ENCODE measurements at regions of chr5 and their contacts with region 1.

Region 1: DNA sequence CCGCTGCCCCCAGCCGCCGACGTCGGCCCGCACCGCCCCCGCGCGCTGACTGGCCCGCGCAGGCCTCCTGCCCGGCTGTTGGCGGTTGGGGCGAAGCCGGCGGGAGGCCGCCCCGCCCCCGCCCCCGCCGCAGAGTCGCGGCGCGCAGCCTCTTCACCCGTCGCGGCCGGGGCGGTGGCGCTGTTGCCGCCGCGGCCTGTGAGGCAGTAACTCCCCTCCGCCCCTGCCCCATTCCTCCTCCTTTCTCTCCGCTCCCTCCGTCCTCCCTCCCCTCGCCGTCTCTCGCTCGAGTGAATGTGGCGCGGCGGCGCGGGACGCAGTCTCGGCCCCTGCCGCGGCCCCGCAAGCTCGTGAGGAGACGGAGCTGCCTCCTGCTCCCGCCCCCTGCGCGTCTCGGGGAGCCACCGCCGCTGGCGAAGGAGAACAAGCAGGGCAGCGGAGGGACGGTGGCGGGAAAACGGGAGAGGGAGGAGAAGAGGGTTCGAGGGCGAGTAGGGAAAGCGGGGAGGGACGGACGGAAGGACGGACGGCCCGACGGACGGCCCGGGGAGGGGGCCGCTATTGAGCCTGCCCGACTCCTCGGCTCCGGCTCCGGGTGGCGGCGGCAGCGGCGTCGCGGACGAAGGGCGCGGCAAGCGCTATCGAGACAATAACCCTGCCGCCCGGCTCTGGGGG is 637 bp upstream of the ERBIN start:
- DNase-seq: peak; percentile 82
- H3K4me3 ChIP-seq: peak overlapping the region; percentile 85 to 97 (median 86)
- H3K27ac ChIP-seq: peak overlapping the region; percentile 94
- H3K4me1 ChIP-seq: peaks cover 4% of the 10 kb centered on the region
- H3K27me3 ChIP-seq: no peaks in the 10 kb centered on the region
- CTCF ChIP-seq: peak in 1 of 2 donors; percentile 43

Region 2: DNA sequence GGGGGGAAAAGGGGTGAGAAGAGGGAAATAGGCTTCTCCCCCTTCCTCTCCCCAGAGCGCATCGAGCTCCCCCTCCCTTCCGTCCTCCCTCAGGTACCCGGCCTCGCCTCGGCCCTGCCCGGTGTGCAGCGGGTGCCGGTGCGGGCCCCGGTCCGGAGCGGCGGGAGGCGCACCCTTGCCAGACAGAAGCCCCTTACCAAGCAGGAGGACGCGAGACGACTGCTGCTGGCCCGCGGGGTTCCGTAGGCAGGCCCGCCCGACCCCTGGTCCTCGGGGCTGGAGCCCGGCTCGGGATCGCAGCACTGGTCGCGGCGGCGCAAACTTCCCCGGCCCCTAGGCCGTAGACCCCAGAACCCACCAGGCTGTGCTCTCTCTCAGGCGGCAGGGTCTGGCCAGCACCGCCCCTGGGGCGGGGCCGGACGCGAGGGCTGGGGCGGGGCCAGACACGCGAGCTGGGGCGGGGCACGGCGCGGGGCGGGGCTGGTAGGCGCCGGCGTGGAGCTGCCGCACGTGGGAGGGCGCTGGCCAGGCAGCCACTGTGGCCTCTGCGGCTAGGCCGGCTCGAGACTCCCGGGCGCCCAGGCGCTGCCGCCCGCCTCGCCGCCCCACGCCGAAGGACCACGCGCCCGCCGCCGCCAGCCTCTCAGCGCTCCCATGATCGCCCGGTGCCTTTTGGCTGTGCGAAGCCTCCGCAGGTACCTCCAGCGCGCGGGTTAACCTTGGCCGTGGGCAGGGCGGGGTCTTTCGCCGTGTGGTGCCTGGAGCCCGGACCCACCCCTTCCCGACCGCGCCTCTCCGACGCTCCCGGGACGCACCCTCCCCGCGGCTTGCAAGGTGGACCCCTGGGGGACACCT is 203.8 kb before region 1 on chr5 and contains the starts of genes NLN and SGTB:
- CTCF ChIA-PET with region 1: no interaction called
- dilution Hi-C with region 1: no loop called
- in situ Hi-C with region 1: no loop called
- intact Hi-C with region 1: loop called (anchors 5 kb)
- DNase-seq: peak; percentile 67
- H3K4me3 ChIP-seq: peak within 1 kb of the TSS; percentile 90 to 96 (median 96)
- H3K27ac ChIP-seq: peak within 1 kb of the TSS; percentile 69
- H3K4me1 ChIP-seq: peaks cover 3% of the 10 kb centered on the region
- H3K27me3 ChIP-seq: no peaks in the 10 kb centered on the region
- CTCF ChIP-seq: no peak
- total RNA-seq, gene NLN: 25.5 to 37.0 TPM
- total RNA-seq, gene SGTB: 15.2 to 20.9 TPM

Region 3: DNA sequence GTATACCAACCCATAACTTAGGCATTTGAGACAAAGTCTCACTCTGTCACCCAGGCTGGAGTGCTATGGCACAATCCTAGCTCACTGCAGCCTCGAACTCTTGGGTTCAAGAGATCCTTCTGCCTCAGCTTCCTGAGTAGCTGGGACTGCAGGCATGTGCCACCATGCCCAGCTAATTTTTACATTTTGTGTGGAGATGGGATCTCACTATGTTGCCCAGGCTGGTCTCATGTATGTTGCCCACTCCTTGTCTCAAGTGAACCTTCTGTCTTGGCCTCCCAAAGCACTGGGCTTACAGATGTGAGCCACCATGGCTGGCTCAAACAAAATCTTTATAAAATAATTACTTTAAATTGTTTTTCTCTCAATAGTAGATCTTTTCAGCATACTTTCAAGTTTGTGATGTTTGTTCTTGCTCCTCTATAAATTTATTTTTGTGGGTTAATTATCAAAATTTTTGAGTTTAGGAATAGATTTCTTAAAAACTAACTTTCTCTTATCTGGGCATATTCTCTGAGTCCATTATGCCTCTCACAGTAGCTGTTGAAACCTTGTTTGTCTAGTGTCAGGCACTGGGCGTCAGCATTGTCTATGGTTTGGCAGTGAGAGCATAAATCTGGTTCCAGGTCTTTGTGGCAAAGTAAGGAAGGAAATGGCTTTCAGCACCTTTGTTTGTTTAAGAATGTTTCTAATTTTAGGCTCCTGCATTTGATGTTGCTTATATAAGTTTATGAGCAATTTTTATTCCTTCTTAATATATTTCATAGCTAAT is 165.0 kb before region 1 on chr5:
- CTCF ChIA-PET with region 1: no interaction called
- dilution Hi-C with region 1: no loop called
- in situ Hi-C with region 1: no loop called
- intact Hi-C with region 1: loop called (anchors 5 kb)
- DNase-seq: peak; percentile 43
- H3K4me3 ChIP-seq: no peak overlapping the region
- H3K27ac ChIP-seq: no peak overlapping the region
- H3K4me1 ChIP-seq: no peaks in the 10 kb centered on the region
- H3K27me3 ChIP-seq: no peaks in the 10 kb centered on the region
- CTCF ChIP-seq: peak; percentile 20 to 51

Region 4: GRCh38 chr5:65871182-65871581 is 54.6 kb before region 1 on chr5:
- CTCF ChIA-PET with region 1: no interaction called
- dilution Hi-C with region 1: no loop called
- in situ Hi-C with region 1: no loop called
- intact Hi-C with region 1: loop called (anchors 2 kb)
- DNase-seq: peak; percentile 80
- H3K4me3 ChIP-seq: no peak overlapping the region
- H3K27ac ChIP-seq: peak overlapping the region; percentile 35
- H3K4me1 ChIP-seq: peaks cover 26% of the 10 kb centered on the region
- H3K27me3 ChIP-seq: no peaks in the 10 kb centered on the region
- CTCF ChIP-seq: no peak

Region 5: GRCh38 chr5:66010476-66010875 is 84.7 kb after region 1 on chr5:
- CTCF ChIA-PET with region 1: no interaction called
- dilution Hi-C with region 1: no loop called
- in situ Hi-C with region 1: no loop called
- intact Hi-C with region 1: loop called (anchors 2 kb)
- DNase-seq: peak; percentile 64
- H3K4me3 ChIP-seq: no peak overlapping the region
- H3K27ac ChIP-seq: no peak overlapping the region
- H3K4me1 ChIP-seq: peaks cover 5% of the 10 kb centered on the region
- H3K27me3 ChIP-seq: no peaks in the 10 kb centered on the region
- CTCF ChIP-seq: no peak

Region 6: GRCh38 chr5:66680739-66681138 is 755.0 kb after region 1 on chr5:
- CTCF ChIA-PET with region 1: no interaction called
- dilution Hi-C with region 1: no loop called
- in situ Hi-C with region 1: no loop called
- intact Hi-C with region 1: no loop called
- DNase-seq: no peak
- H3K4me3 ChIP-seq: no peak overlapping the region
- H3K27ac ChIP-seq: no peak overlapping the region
- H3K4me1 ChIP-seq: no peaks in the 10 kb centered on the region
- H3K27me3 ChIP-seq: no peaks in the 10 kb centered on the region
- CTCF ChIP-seq: no peak

Measured in mammary epithelial cell (primary cell).